ENCODE measurements at regions of chr13 and their contacts with region 1.

Region 1: GRCh38 chr13:27182844-27183497 is 11.4 kb upstream of the USP12 start:
- DNase-seq: peak; percentile 78
- ATAC-seq: peak; percentile 91
- H3K4me3 ChIP-seq: peak overlapping the region in 1 of 2 experiments; percentile 39; a peak in 2 of 4 replicates
- H3K27ac ChIP-seq: peak overlapping the region; percentile 19; the same call in 1 of the 2 replicates
- H3K4me1 ChIP-seq: peaks cover 8 to 38% of the 10 kb centered on the region in 2 experiments; a peak in 3 of 4 replicates
- H3K27me3 ChIP-seq: no peaks in the 10 kb centered on the region
- CTCF ChIP-seq: no peak
- POLR2A ChIP-seq: no peak
- RAD21 ChIP-seq: peak; percentile 37; the same call in 1 of the 2 replicates

Region 2: GRCh38 chr13:27194895-27195764 is 12.2 kb after region 1 on chr13:
- CTCF ChIA-PET with region 1: interaction called, 6 read pairs
- POLR2A ChIA-PET with region 1: interaction called, 11 read pairs
- RAD21 ChIA-PET with region 1: interaction called in 1 of 2 experiments, 3 read pairs
- intact Hi-C with region 1: no loop called
- DNase-seq: peak; percentile 96
- ATAC-seq: peak; percentile 98
- H3K4me3 ChIP-seq: peak overlapping the region; percentile 20 to 35
- H3K27ac ChIP-seq: peak overlapping the region; percentile 72
- H3K4me1 ChIP-seq: peaks cover 24 to 45% of the 10 kb centered on the region in 2 experiments
- H3K27me3 ChIP-seq: no peaks in the 10 kb centered on the region
- CTCF ChIP-seq: 0 out of 6 replicates have a peak, but pooled peaks of 1 of the 3 experiments have one; percentile 1
- POLR2A ChIP-seq: no peak
- RAD21 ChIP-seq: peak; percentile 34; the same call in 1 of the 2 replicates

Region 3: GRCh38 chr13:28584873-28585381 is 1402.0 kb after region 1 on chr13:
- CTCF ChIA-PET with region 1: no interaction called
- POLR2A ChIA-PET with region 1: no interaction called
- RAD21 ChIA-PET with region 1: no interaction called
- intact Hi-C with region 1: no loop called
- DNase-seq: no peak
- ATAC-seq: no peak
- H3K4me3 ChIP-seq: no peak overlapping the region
- H3K27ac ChIP-seq: no peak overlapping the region
- H3K4me1 ChIP-seq: no peaks in the 10 kb centered on the region
- H3K27me3 ChIP-seq: no peaks in the 10 kb centered on the region
- CTCF ChIP-seq: no peak
- POLR2A ChIP-seq: no peak
- RAD21 ChIP-seq: no peak

Measured in HCT116 (cell line).